ENCODE measurements at regions of chr5 and their contacts with region 1.

Region 1: DNA sequence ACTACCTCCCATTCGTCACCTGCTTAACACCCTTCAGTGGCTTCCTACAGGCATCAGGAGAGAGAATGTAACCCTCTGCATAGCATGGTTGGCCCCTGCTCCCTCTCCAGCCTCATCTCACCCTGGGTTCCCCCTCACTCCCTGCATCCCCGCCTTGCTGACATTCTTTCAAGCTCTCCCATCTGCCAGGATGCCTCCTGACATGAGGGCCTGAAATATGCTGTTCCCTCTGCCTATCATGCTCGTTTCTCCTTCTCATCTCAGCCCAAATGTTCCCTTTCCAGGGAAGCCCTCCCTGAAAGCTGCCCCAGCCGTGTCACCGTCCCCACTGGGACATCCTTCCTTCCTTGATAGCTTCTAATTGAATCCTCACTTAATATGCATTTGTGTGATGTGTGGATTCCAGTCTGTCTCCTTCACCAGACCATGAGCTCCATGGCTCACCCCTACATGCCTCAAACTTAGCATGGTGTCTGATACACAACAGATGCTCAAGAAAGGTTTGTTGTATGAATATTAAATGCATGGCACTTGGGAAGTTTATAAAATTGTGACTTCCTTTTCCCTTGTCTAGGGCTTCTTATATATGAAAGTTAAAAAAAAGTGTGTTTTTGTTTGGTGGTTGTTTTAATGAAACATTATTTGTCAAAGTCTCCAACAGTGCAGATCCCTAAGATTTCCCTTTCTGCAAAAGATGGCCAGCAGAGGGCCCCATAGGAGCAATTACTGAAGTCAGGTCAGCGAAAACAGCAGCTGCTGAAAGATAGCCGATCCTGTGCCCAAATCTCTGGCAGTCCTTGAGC is 7.3 kb upstream of the C5orf58 start:
- DNase-seq: peak; percentile 23
- ATAC-seq: peak; percentile 76
- H3K4me3 ChIP-seq: no peak overlapping the region
- H3K27ac ChIP-seq: no peak overlapping the region
- H3K4me1 ChIP-seq: no peaks in the 10 kb centered on the region
- H3K27me3 ChIP-seq: no peaks in the 10 kb centered on the region
- CTCF ChIP-seq: peak; percentile 66
- EP300 ChIP-seq: no peak
- POLR2A ChIP-seq: no peak
- RAD21 ChIP-seq: no peak

Region 2: GRCh38 chr5:170046241-170046640 is 179.3 kb before region 1 on chr5:
- CTCF ChIA-PET with region 1: no interaction called
- POLR2A ChIA-PET with region 1: no interaction called
- in situ Hi-C with region 1: no loop called
- intact Hi-C with region 1: no loop called
- DNase-seq: no peak
- ATAC-seq: no peak
- H3K4me3 ChIP-seq: no peak overlapping the region
- H3K27ac ChIP-seq: no peak overlapping the region
- H3K4me1 ChIP-seq: no peaks in the 10 kb centered on the region
- H3K27me3 ChIP-seq: peaks cover 0 to 8% of the 10 kb centered on the region in 2 experiments; a peak in 2 of 5 replicates
- CTCF ChIP-seq: no peak
- EP300 ChIP-seq: no peak
- POLR2A ChIP-seq: no peak
- RAD21 ChIP-seq: no peak

Region 3: GRCh38 chr5:170420780-170421412 is 195.4 kb after region 1 on chr5:
- CTCF ChIA-PET with region 1: interaction called, 24 read pairs
- POLR2A ChIA-PET with region 1: no interaction called
- in situ Hi-C with region 1: loop called (anchors 5 kb)
- intact Hi-C with region 1: no loop called
- DNase-seq: peak; percentile 49
- ATAC-seq: peak; percentile 87
- H3K4me3 ChIP-seq: no peak overlapping the region
- H3K27ac ChIP-seq: no peak overlapping the region
- H3K4me1 ChIP-seq: no peaks in the 10 kb centered on the region
- H3K27me3 ChIP-seq: no peaks in the 10 kb centered on the region; a peak in 2 of 5 replicates
- CTCF ChIP-seq: peak; percentile 72
- EP300 ChIP-seq: no peak
- POLR2A ChIP-seq: no peak
- RAD21 ChIP-seq: no peak